MCF 10A (cell line): ENCODE measurements at regions of chr14 and their contacts with region 1.

Region 1: DNA sequence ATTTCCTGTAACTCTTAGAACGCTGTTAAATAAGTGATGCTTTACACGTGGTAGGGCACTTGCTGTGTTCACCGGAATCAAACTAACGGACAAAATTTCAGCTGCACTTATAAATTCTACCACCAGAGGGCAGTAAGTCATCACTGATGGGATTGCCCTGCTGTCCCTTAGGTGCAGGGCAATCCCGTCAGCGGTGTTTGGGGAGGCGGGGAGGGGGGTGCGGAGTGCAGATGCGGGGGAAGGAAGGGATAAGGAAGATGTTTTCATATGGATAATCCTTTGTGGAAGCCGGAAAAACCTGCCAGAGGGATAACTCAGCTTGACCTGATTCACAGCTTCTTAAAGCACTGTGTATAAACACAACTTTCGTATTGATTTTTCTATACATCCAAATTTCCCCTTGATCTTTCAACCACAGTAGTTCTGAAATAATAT is 21.7 kb upstream of the SLC10A1 start:
- DNase-seq: peak; percentile 74
- H3K4me3 Mint-ChIP-seq: no peak overlapping the region
- H3K27ac Mint-ChIP-seq: no peak overlapping the region
- H3K4me1 Mint-ChIP-seq: no peaks in the 10 kb centered on the region
- H3K27me3 Mint-ChIP-seq: no peaks in the 10 kb centered on the region
- CTCF ChIP-seq: peak; percentile 82

Region 2: DNA sequence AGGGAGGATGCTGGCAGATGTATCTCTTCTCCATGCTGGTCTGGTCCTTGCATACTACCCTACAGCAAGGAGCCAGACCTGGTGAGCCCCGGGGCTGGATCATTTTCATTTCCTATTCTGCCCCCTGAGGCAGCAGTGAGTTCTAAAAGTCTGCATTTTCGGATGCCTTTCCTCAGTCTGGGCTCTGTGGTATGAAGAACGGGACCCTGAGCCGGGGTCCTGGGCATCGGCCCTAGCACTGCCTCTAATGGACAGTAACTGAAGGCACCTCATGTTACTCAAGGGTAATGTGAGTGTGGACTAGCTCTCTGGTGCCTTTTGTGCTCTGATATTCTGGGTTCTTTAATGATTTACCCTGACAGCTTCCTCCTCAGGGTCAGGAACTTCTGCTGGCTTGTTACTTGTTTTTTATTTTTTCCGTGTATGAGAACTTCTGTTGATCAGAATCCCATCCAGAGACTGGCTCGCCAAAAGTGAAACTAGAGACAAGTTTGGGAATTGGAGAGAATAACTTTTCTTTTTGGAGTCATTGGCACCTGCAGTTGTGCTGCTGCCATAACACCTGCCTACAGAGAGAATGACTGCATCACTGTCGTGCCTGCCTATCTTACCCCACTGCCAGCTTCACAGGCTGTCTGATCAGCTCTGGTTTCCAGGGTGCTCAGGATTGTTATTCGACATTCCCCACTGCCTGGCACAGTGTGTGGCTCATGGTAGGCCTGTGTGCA is 145.0 kb before region 1 on chr14:
- CTCF ChIA-PET with region 1: no interaction called
- POLR2A ChIA-PET with region 1: no interaction called
- intact Hi-C with region 1: no loop called
- DNase-seq: no peak
- H3K4me3 Mint-ChIP-seq: no peak overlapping the region
- H3K27ac Mint-ChIP-seq: no peak overlapping the region
- H3K4me1 Mint-ChIP-seq: peaks cover 20% of the 10 kb centered on the region
- H3K27me3 Mint-ChIP-seq: no peaks in the 10 kb centered on the region
- CTCF ChIP-seq: no peak

Region 3: DNA sequence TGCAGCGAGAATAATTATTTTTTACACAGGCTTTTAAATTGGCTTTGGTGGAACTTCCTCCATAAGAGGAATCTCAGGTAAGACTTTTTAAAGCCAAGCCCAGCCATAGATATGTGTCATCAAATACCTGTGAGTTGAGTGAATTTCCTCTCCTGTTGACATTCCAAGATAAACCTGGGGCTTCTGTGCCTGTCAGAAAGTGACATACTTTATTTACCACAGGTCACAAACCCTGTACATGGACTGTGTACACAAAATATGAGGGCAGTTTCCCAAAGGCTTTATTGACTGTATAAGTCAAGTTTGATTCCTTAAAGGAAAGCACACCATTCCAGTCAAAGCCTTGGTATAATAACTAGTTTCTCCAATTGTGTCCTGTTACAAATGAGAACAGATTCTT is 77.7 kb before region 1 on chr14:
- CTCF ChIA-PET with region 1: no interaction called
- POLR2A ChIA-PET with region 1: no interaction called
- intact Hi-C with region 1: no loop called
- DNase-seq: no peak
- H3K4me3 Mint-ChIP-seq: no peak overlapping the region
- H3K27ac Mint-ChIP-seq: no peak overlapping the region
- H3K4me1 Mint-ChIP-seq: no peaks in the 10 kb centered on the region
- H3K27me3 Mint-ChIP-seq: no peaks in the 10 kb centered on the region
- CTCF ChIP-seq: no peak

Region 4: GRCh38 chr14:69879175-69880043 is 60.6 kb after region 1 on chr14 and contains the start of gene SMOC1:
- CTCF ChIA-PET with region 1: interaction called, 6 read pairs
- POLR2A ChIA-PET with region 1: interaction called, 4 read pairs
- intact Hi-C with region 1: loop called (anchors 1 kb)
- DNase-seq: peak; percentile 88
- H3K4me3 Mint-ChIP-seq: peak within 1 kb of the TSS; percentile 87
- H3K27ac Mint-ChIP-seq: peak within 1 kb of the TSS; percentile 61
- H3K4me1 Mint-ChIP-seq: peaks cover 40% of the 10 kb centered on the region
- H3K27me3 Mint-ChIP-seq: no peaks in the 10 kb centered on the region
- CTCF ChIP-seq: no peak
- total RNA-seq, gene SMOC1: 22.9 and 23.6 TPM in 2 replicates

Region 5: DNA sequence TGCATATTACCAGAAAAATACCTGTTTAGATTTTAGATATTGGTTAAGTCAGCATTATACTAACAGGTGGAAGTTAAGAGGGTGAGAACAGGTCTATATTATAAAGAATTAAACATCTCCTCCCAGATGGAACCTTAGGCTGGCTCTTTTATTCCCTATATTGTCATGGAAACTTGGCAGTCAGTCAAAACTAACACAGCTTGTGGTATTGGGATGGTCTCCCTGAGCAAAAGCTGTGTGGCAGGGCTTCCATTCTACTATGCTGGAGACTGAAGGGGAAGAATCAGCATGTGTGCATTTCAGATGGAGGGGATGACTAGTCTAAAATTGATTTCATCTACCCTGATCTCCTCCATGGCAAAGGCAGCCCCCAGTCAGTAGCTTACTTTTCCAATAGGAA is 127.1 kb after region 1 on chr14:
- CTCF ChIA-PET with region 1: no interaction called
- POLR2A ChIA-PET with region 1: no interaction called
- intact Hi-C with region 1: no loop called
- DNase-seq: peak; percentile 53
- H3K4me3 Mint-ChIP-seq: no peak overlapping the region
- H3K27ac Mint-ChIP-seq: no peak overlapping the region
- H3K4me1 Mint-ChIP-seq: peaks cover 6% of the 10 kb centered on the region
- H3K27me3 Mint-ChIP-seq: no peaks in the 10 kb centered on the region
- CTCF ChIP-seq: no peak

Region 6: GRCh38 chr14:70018713-70019211 is 200.0 kb after region 1 on chr14:
- CTCF ChIA-PET with region 1: interaction called, 13 read pairs
- POLR2A ChIA-PET with region 1: interaction called, 3 read pairs
- intact Hi-C with region 1: loop called (anchors 5 kb)
- DNase-seq: peak; percentile 19
- H3K4me3 Mint-ChIP-seq: no peak overlapping the region
- H3K27ac Mint-ChIP-seq: peak overlapping the region; percentile 40
- H3K4me1 Mint-ChIP-seq: peaks cover 17% of the 10 kb centered on the region
- H3K27me3 Mint-ChIP-seq: no peaks in the 10 kb centered on the region
- CTCF ChIP-seq: no peak

Region 7: DNA sequence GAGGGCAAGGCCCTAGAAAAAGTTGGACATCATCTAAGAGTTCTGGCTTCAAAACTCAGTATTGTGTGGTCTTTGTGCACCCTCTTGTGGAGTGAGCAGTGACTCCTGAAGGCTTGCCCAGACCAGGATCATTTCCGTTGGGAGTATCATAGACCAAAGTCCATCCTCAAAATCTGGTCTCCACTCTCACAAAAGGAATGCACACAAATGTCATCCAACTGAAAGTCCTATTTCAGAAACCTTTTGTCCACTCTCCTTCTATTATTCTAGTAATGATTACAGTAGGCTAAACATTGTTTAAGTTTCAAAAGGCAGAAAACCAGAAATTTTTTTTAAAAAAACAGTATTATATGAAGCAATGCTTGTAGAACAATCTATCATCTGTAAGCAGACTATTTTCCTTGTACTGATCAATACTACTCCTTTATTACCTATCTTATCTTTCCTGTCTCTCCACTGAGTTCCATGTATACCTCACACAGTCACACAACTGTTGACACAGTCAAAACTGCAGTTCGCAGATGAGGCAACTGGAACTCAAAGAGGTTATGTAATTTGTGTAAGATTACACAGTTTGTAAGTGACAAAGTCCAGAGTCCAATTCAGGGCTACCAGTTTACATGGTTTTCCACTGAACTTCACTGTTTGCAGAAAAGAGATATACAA is 499.3 kb after region 1 on chr14:
- CTCF ChIA-PET with region 1: interaction called, 14 read pairs
- POLR2A ChIA-PET with region 1: interaction called, 3 read pairs
- intact Hi-C with region 1: loop called (anchors 2 kb)
- DNase-seq: peak; percentile 63
- H3K4me3 Mint-ChIP-seq: no peak overlapping the region
- H3K27ac Mint-ChIP-seq: no peak overlapping the region
- H3K4me1 Mint-ChIP-seq: no peaks in the 10 kb centered on the region
- H3K27me3 Mint-ChIP-seq: no peaks in the 10 kb centered on the region
- CTCF ChIP-seq: peak; percentile 51